ENCODE measurements at regions of chr22 and their contacts with region 1.

Region 1: DNA sequence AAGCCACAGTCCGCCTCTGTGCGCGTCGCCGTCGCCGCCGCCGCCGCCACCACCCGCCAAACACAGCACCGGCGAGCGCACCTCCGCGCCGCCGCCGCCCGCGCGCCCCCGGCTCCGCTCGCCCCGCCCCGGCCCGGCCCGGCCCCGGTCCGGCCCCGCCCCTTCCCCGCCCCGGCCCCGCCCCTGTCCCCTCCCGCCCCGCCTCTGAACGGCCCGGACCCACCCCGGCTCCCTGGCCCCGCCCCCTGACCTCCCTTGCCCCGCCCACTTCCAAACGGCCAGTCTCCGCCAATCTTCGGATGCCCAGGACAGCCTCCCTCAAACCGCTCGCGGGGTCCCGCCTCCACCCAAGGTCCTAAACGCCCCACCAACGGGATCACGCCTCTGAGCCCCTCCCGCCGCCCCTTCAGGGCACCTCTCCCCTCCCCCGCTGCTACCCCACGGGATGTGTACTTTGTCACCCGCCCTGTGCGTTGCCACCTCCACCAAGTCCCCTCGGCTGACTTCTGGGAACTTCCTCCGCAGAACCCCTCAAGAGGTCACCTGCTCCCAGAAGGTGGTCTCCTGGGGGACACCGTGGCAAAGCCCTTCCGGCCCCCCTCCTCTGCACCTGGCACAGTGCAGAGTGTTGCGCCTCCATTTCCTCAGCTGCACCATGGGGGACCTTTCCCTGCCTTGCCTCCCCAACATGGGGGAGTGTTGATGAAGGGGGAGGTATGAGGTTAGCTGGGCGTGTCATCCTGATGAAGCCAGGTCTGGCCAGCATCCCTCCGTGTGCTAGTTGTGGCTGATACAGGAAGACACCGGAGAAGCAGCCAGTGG is at the start of gene KIAA0930:
- DNase-seq: peak; percentile 53
- ATAC-seq: peak; percentile 46
- H3K4me3 ChIP-seq: peak within 1 kb of the TSS; percentile 65 to 90 (median 81)
- H3K27ac ChIP-seq: peak within 1 kb of the TSS; percentile 24
- H3K4me1 ChIP-seq: peaks cover 82% of the 10 kb centered on the region
- H3K27me3 ChIP-seq: no peaks in the 10 kb centered on the region
- CTCF ChIP-seq: no peak; the same call in 1 of the 2 replicates
- EP300 ChIP-seq: no peak
- POLR2A ChIP-seq: 0 out of 4 replicates have a peak, but pooled peaks of 1 of the 2 experiments have one; percentile 13
- RAD21 ChIP-seq: no peak
- total RNA-seq, gene KIAA0930: 25.5 and 27.0 TPM in 2 replicates

Region 2: GRCh38 chr22:45163451-45164269 is 77.4 kb before region 1 on chr22 and contains the start of gene NUP50:
- CTCF ChIA-PET with region 1: no interaction called
- POLR2A ChIA-PET with region 1: interaction called, 16 read pairs
- in situ Hi-C with region 1: loop called (anchors 10 kb)
- intact Hi-C with region 1: no loop called
- DNase-seq: peak; percentile 89
- ATAC-seq: peak; percentile 64
- H3K4me3 ChIP-seq: peak within 1 kb of the TSS; percentile 87 to 95 (median 94)
- H3K27ac ChIP-seq: peak within 1 kb of the TSS; percentile 83
- H3K4me1 ChIP-seq: peaks cover 73% of the 10 kb centered on the region
- H3K27me3 ChIP-seq: peaks cover 0 to 4% of the 10 kb centered on the region in 2 experiments; a peak in 2 of 5 replicates
- CTCF ChIP-seq: peak; percentile 49
- EP300 ChIP-seq: no peak
- POLR2A ChIP-seq: peak; percentile 73 to 84
- RAD21 ChIP-seq: peak; percentile 42; the same call in 1 of the 2 replicates
- total RNA-seq, gene NUP50: 52.4 and 71.0 TPM in 2 replicates

Measured in HepG2 (cell line).